ENCODE measurements at regions of chr9 and their contacts with region 1.

Region 1: DNA sequence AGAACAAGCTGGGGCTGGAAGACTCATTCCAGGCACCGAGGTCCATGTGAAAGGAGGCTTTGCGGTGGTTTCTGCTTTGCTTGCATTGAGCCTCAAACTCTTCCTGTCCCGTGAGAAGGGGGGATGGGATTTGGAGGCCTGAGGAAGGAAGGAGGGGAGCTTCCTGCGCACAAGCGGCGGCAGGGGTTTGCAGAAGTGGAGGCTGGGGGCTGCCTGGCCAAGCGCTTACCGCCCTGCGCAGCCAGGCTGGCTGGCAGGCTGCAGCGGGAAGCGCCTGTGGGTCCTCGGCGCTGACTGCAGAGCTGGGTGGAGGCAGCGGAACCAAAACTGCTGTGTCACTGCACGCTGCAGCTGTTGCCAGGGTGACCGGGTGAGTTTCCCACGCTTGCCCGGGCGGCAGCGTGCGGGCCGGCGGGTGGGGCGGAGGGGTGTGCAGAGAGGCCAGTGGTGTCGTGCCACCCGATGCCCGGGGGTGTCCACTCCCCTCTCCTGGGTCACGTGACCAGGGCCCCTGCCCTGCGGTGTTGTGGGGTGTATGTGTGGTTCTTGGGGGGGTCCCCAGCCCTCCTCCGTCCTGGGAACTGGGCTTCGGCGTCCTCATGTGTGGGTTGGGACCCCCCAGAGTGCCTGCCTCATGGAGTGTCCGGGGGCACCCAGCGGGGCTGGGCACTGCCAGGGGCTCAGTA is 81.0 kb downstream of the RXRA start:
- DNase-seq: peak; percentile 98

Region 2: GRCh38 chr9:134325817-134326723 is 81.2 kb before region 1 on chr9 and contains the start of gene RXRA:
- intact Hi-C with region 1: loop called (anchors 2 kb)
- DNase-seq: peak; percentile 91
- total RNA-seq, gene RXRA: 42.6 TPM

Region 3: DNA sequence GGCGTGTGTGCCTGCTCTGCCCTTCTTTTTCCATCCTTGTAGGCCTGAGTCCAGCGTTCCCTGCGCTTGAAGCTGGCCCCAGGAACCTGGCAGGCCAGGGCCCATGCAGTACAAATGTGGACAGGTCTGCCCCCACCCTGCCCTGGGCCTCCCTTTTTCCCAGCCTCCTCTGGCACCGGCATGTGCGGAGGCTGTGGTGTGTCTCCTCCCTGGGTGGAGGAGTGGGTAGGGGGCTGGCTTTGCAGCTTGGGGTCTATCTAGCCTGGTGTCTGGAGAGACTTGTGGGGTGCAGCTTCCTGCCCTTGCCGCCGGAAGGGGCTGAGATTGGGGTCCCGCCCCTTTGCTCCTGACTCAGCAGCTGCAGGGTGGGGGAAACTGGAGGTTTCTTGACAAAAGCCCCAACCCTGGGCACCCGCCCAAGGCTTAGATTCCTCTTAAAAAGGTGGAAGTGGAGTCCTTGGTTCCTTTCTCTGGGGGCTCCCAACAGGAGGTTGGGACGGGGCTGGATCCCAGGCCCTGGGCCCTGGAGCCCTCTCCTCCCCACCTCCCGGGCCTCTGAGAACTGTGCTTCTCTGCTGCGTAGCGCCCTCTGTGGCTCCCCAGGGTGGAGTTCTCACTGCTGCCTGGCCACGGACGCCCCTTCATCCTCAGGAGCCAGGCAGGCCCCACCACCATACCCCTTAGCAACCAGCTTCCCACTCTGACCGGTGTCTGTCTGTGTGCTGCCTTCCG is 63.0 kb before region 1 on chr9:
- intact Hi-C with region 1: loop called (anchors 5 kb)
- DNase-seq: peak; percentile 84

Region 4: DNA sequence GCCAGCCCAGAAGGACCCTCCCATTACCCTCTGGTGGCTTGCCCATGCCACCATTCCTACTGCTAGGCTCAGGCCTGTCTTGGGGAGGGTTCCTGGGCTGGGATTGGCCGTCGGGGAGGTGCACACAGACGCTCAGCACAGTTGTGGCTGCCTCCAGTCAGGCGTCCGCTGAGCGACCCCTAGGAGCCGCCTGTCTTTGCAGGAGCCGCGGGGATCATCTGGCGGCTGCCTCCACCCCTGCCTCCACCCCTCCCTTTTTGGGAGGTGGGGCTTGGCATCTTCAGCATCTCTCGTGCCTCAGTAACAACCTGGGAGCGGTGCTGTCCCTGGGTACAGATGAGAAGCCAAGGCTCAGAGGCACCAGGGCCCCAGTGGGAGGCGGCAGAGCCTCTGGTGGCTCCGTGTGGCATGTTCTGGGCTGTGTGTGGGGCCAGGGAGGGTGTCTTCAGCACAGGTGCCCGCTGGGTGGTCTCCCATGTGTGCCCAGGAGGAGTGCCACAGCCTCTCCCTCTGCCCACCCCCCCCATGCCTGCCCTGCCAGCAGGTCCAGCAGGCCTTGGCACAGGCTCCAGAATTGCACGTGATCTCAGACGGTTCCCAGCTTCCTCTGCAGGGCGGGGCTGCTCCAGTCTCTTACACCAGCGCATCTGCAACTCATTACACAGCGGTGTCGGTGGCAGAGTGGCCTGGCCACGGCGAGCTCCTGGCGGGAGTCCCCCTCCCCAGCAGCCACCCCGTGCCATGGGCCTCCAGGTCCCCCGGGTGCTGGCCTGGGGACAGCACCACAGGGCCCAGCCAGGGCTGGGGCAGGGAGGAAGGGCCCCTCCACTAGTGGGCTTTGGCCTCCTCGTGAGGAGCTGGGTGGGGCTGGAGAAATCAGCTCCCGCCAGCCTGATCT is 41.2 kb before region 1 on chr9:
- intact Hi-C with region 1: loop called (anchors 5 kb)
- DNase-seq: peak; percentile 96

Measured in cardiac septum (tissue), 1 donor.